ENCODE measurements at regions of chr13 and their contacts with region 1.

Region 1: GRCh38 chr13:23934520-23934919 is 37.2 kb upstream of the C1QTNF9B start:
- DNase-seq: no peak
- ATAC-seq: no peak

Region 2: DNA sequence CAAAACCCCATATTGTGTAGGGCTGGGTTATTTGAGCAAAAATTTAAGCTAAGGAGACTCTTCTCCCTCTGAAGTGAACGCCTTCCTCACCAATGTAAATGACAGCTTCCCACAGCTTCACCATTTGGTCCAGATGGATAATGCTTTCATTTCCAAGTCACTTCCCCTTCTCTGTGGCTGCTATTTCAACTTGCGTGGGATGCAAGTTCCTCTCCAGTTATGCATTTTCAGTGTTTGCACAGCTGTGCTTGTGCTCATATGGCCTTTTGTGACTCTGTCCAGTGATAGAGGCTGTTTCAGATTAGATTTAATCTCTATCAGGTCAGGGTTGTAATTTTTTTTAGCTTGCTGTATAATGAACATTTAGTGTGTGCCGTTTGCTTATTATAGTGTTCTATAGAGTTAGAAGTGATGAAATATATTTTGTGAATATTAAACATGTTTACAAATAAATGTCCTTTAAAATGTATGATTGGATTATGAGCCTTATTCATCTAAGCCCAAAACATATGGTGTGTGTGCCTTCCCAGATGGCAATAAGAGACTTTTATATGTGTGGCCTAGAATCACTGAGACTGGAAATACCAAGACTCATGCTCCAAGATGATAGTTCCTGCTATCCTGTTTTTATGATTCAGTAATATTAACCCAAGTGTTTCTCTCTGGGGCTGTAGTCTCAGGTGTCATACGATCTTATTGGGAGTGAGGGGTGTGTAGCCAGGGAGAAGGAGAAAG is 277.7 kb before region 1 on chr13:
- intact Hi-C with region 1: no loop called
- DNase-seq: no peak
- ATAC-seq: peak; percentile 71

Region 3: DNA sequence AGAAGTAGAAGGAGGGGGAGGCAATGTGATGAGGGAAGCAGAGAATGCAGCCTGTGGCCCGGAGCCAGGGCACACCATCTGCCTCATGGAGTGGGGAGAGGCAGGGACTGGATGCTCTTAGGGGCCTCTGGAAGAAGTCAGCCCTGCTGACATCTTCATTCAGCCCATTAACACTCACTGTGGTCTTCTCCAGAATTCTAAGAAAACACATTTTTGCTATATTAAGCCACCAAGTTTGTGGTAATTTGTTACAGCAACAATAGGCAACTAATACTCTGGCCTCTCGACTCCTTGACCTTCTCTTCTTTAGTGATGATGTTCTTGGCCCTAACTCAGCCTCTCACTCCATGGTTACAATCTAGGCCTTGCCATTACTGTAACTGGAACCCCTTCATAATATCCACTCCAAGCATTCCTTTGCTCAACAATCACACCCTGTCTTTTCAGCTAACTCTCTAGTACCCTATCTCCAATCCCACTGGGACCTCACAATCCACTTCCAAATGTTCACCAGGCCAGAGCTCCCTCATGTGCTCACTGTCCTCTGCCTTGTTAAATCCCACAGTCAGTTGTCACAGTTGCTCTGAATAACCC is 143.8 kb before region 1 on chr13:
- intact Hi-C with region 1: no loop called
- DNase-seq: no peak
- ATAC-seq: peak; percentile 64

Region 4: DNA sequence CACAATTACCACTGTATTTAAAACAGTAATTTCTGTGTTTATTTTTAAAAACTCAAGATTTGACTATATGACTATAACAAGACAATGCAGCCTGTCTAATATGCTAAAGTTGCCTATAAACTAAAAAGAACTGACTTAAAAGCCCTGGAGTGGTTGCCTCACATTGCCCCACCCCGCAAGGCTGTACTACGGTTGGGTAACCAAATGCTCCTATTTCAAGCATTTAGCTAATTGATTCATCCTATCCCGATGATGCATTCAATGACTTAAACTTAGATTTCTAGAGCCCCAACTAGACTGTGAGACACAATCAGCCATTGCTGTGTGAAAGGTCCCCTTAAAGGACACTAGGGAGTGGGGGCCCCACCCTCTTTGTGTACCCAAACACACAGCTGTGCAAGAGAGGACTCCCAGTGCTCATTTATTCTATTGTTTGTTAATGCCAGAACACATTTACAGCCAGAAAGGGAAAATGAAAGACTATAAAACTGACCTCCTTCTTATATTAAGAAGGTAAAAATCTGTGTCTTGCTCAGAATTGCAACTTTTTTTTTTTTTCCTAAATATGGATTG is 112.2 kb before region 1 on chr13:
- intact Hi-C with region 1: no loop called
- DNase-seq: no peak
- ATAC-seq: no peak

Region 5: GRCh38 chr13:23980160-23980551 is 45.6 kb after region 1 on chr13:
- intact Hi-C with region 1: loop called (anchors 2 kb)
- DNase-seq: peak; percentile 92
- ATAC-seq: peak; percentile 95

Measured in left ventricle myocardium superior (tissue), 1 donor.